ENCODE measurements at regions of chr14 and their contacts with region 1.

Region 1: DNA sequence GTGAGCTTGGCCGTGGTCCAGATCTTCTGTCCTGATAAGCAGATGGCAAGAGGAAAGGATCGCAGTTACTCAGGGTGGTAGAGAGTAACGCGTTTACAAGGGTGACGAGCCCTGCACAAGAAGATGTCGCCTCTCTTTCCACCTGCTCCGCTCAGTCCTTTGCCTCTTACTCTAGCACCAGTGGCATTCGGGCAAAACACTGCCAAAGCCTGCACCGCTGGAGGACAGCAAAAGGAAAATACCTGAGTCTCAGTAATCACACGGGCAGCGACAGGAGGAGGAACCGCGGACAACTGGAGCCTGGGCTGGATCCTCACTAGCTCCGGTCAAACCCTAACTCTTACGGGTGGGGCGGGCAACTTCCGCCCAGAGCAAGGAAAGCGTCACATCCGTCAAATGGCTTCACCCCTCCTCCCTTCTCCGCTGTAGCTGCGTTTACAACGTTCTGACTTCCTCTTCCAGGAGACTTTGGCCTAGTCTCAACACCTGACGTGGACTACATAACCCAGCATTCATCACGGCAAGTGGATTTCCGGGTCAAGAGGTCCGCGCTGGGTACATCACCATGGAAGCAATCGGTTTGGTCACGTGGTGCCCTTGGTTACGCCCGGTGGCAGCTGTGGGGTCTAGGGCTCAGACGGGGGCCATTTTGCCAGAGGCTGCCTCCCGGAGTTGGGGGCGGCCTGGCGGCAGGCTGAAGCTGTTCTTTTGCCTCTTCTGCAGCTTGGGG is at the starts of genes KLHL28 and TOGARAM1:
- DNase-seq: peak; percentile 90 to 100 (median 94)
- ATAC-seq: peak; percentile 88
- H3K4me3 ChIP-seq: peak within 1 kb of the TSS; percentile 91
- H3K4me3 Mint-ChIP-seq: no peak within 1 kb of the TSS
- H3K27ac ChIP-seq: peak within 1 kb of the TSS; percentile 93 to 97
- H3K27ac Mint-ChIP-seq: no peak within 1 kb of the TSS
- H3K4me1 ChIP-seq: peaks cover 34% of the 10 kb centered on the region
- H3K4me1 Mint-ChIP-seq: peaks cover 62% of the 10 kb centered on the region
- H3K27me3 ChIP-seq: no peaks in the 10 kb centered on the region
- H3K27me3 Mint-ChIP-seq: no peaks in the 10 kb centered on the region
- CTCF ChIP-seq: no peak
- total RNA-seq, gene KLHL28: 49.3 to 49.7 TPM
- total RNA-seq, gene TOGARAM1: 13.2 to 17.8 TPM

Region 2: GRCh38 chr14:44912041-44912869 is 49.5 kb before region 1 on chr14:
- CTCF ChIA-PET with region 1: no interaction called
- POLR2A ChIA-PET with region 1: interaction called, 15 read pairs
- intact Hi-C with region 1: no loop called
- DNase-seq: peak in 1 of 14 experiments; percentile 8
- ATAC-seq: no peak
- H3K4me3 ChIP-seq: no peak overlapping the region
- H3K4me3 Mint-ChIP-seq: peak overlapping the region; percentile 12
- H3K27ac ChIP-seq: no peak overlapping the region
- H3K27ac Mint-ChIP-seq: no peak overlapping the region
- H3K4me1 ChIP-seq: peaks cover 9% of the 10 kb centered on the region
- H3K4me1 Mint-ChIP-seq: peaks cover 4% of the 10 kb centered on the region
- H3K27me3 ChIP-seq: peaks cover 28 to 33% of the 10 kb centered on the region in 2 experiments
- H3K27me3 Mint-ChIP-seq: peaks cover 45% of the 10 kb centered on the region
- CTCF ChIP-seq: no peak

Region 3: GRCh38 chr14:45083971-45084722 is 122.4 kb after region 1 on chr14 and contains the start of gene PRPF39:
- CTCF ChIA-PET with region 1: no interaction called
- POLR2A ChIA-PET with region 1: interaction called, 33 read pairs
- intact Hi-C with region 1: loop called (anchors 2 kb)
- DNase-seq: peak; percentile 88 to 98 (median 94)
- ATAC-seq: peak; percentile 91
- H3K4me3 ChIP-seq: peak within 1 kb of the TSS; percentile 78
- H3K4me3 Mint-ChIP-seq: peak within 1 kb of the TSS; percentile 98
- H3K27ac ChIP-seq: peak within 1 kb of the TSS; percentile 47 to 79
- H3K27ac Mint-ChIP-seq: peak within 1 kb of the TSS; percentile 89
- H3K4me1 ChIP-seq: peaks cover 25% of the 10 kb centered on the region
- H3K4me1 Mint-ChIP-seq: peaks cover 58% of the 10 kb centered on the region
- H3K27me3 ChIP-seq: no peaks in the 10 kb centered on the region
- H3K27me3 Mint-ChIP-seq: no peaks in the 10 kb centered on the region
- CTCF ChIP-seq: no peak
- total RNA-seq, gene PRPF39: 58.9 to 64.3 TPM

Region 4: GRCh38 chr14:45095143-45095542 is 133.4 kb after region 1 on chr14:
- CTCF ChIA-PET with region 1: no interaction called
- POLR2A ChIA-PET with region 1: no interaction called
- intact Hi-C with region 1: no loop called
- DNase-seq: no peak
- ATAC-seq: no peak
- H3K4me3 ChIP-seq: no peak overlapping the region
- H3K4me3 Mint-ChIP-seq: no peak overlapping the region
- H3K27ac ChIP-seq: no peak overlapping the region
- H3K27ac Mint-ChIP-seq: no peak overlapping the region
- H3K4me1 ChIP-seq: no peaks in the 10 kb centered on the region
- H3K4me1 Mint-ChIP-seq: peaks cover 37% of the 10 kb centered on the region
- H3K27me3 ChIP-seq: no peaks in the 10 kb centered on the region
- H3K27me3 Mint-ChIP-seq: no peaks in the 10 kb centered on the region
- CTCF ChIP-seq: no peak

Region 5: DNA sequence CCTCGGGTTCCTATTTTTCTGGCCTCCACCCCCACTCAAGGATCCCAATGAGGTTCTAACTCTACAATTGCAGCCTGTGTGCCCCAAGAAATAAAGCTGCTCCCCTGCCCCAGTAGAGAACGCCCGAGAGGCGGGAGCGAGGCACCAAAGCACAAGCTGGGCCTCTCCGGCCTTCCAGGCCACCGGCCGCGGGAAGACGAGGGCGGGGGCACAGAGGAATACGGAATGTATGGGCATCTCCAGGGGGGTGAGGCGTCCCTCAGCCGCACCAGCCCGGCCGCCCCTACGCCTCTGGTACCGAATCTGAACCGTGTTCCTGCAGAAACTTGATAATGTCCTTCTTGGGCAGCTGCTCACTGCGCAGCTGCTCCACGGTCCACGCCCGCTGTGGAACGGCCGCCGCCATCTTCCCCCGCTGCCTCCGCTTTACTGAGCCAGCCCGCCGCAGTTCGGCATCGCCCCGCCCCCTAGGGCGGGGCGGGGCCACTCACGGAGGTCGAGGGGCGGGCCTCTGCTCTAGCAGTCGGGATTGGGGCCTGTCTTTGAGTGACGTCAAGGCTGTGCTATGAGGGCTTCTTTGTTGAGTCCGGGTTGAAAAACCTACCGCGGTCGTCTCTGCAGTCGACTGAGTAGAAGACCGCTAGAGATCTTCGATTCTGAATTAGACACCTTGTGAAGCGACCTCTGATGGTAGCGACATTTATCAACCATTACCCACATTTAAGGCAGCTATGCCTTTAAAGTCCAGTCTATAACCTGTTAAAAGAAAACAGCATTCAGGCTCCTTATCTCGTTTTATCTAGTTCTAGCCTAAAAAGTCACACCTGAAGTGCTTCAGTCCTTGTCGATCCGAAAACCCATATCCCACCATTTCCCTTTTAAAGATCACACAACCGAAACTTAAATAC is 172.5 kb after region 1 on chr14 and contains the start of gene FKBP3:
- CTCF ChIA-PET with region 1: interaction called, 7 read pairs
- POLR2A ChIA-PET with region 1: interaction called, 111 read pairs
- intact Hi-C with region 1: loop called (anchors 1 to 2 kb)
- DNase-seq: peak; percentile 90 to 99 (median 94)
- ATAC-seq: peak; percentile 90
- H3K4me3 ChIP-seq: peak within 1 kb of the TSS; percentile 82
- H3K4me3 Mint-ChIP-seq: peak within 1 kb of the TSS; percentile 99
- H3K27ac ChIP-seq: peak within 1 kb of the TSS; percentile 84 to 89
- H3K27ac Mint-ChIP-seq: peak within 1 kb of the TSS; percentile 99
- H3K4me1 ChIP-seq: peaks cover 14% of the 10 kb centered on the region
- H3K4me1 Mint-ChIP-seq: peaks cover 70% of the 10 kb centered on the region
- H3K27me3 ChIP-seq: no peaks in the 10 kb centered on the region
- H3K27me3 Mint-ChIP-seq: no peaks in the 10 kb centered on the region
- CTCF ChIP-seq: peak; percentile 22
- total RNA-seq, gene FKBP3: 36.0 to 40.2 TPM